Sigmoid colon (tissue), 7 donors: ENCODE measurements at regions of chr12 and their contacts with region 1.

Region 1: GRCh38 chr12:92505254-92506231 is 197.2 kb upstream of the PLEKHG7 start:
- DNase-seq: peak; percentile 89
- H3K4me3 ChIP-seq: peak overlapping the region in 1 of 4 donors; percentile 20
- H3K27ac ChIP-seq: peak overlapping the region; percentile 71 to 81 (median 78)
- H3K4me1 ChIP-seq: peaks cover 0 to 49% (median 42%) of the 10 kb centered on the region in 4 donors
- H3K27me3 ChIP-seq: no peaks in the 10 kb centered on the region
- CTCF ChIP-seq: no peak
- EP300 ChIP-seq: no peak
- POLR2A ChIP-seq: no peak

Region 2: GRCh38 chr12:92244036-92244435 is 261.5 kb before region 1 on chr12:
- intact Hi-C with region 1: no loop called
- DNase-seq: peak; percentile 73
- H3K4me3 ChIP-seq: no peak overlapping the region
- H3K27ac ChIP-seq: peak overlapping the region; percentile 48 to 79 (median 66)
- H3K4me1 ChIP-seq: peaks cover 0 to 25% (median 24%) of the 10 kb centered on the region in 4 donors
- H3K27me3 ChIP-seq: no peaks in the 10 kb centered on the region
- CTCF ChIP-seq: peak in 2 of 4 experiments; percentile 12 to 31
- EP300 ChIP-seq: peak; percentile 72 to 94 (median 84)
- POLR2A ChIP-seq: no peak

Region 3: GRCh38 chr12:92561543-92561899 is 56.0 kb after region 1 on chr12:
- intact Hi-C with region 1: loop called (anchors 5 kb)
- DNase-seq: peak; percentile 88
- H3K4me3 ChIP-seq: no peak overlapping the region
- H3K27ac ChIP-seq: peak overlapping the region; percentile 25 to 82 (median 68)
- H3K4me1 ChIP-seq: peaks cover 2 to 41% (median 24%) of the 10 kb centered on the region in 4 donors
- H3K27me3 ChIP-seq: no peaks in the 10 kb centered on the region
- CTCF ChIP-seq: no peak
- EP300 ChIP-seq: peak in 1 of 4 donors; percentile 58
- POLR2A ChIP-seq: no peak